Uterus (tissue), 4 donors: ENCODE measurements at regions of chr5 and their contacts with region 1.

Region 1: DNA sequence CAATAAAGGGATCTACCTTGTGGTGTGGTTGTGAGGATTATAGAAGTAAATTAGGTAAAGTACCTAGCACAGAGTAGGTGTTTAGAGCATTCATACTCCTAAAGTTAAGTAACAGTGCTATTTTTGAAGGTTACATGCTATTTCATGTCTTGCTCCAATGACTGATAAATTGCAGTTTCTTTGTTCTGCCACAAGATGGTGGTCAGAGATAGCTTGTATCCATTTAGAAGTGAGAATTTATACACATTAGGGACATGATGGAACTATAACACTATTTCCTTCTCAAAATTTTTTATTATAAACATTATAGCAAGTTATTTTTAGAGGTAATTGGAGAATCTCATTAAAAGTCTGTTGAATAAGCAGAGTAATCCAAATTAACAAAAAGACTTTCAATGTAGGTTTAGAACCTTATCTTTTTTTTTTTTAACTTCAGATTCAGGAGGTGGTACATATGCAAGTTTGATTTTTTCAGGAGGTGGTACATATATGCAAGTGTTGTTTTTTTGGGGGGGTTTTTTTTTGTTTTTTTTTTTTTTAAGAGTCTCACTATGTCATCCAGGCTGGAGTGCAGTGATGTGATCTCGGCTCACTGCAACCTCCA is 17.1 kb downstream of the MTREX start:
- DNase-seq: no peak
- H3K4me3 ChIP-seq: no peak overlapping the region
- H3K27ac ChIP-seq: no peak overlapping the region
- H3K4me1 ChIP-seq: no peaks in the 10 kb centered on the region
- H3K27me3 ChIP-seq: no peaks in the 10 kb centered on the region
- CTCF ChIP-seq: peak; percentile 44 to 75 (median 62)
- POLR2A ChIP-seq: no peak

Region 2: DNA sequence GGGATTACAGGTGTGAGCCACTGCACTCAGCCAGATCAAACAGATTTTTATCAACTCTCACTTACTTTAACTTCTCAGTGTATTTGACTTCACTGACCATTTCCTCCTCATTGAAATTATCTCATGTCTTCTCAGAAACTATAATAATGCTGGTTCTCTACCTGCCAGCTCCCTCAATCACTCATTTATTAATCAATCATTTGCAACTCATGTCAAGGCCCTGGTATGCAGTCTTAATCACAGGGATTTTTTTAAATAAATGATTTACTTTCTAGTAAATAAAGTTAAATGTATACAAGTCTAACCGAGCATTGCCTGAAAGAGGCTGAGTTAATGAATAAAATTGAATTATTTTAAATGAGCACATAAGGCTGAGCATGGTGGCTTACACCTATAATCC is 146.6 kb after region 1 on chr5:
- intact Hi-C with region 1: no loop called
- DNase-seq: no peak
- H3K4me3 ChIP-seq: no peak overlapping the region
- H3K27ac ChIP-seq: no peak overlapping the region
- H3K4me1 ChIP-seq: no peaks in the 10 kb centered on the region
- H3K27me3 ChIP-seq: no peaks in the 10 kb centered on the region
- CTCF ChIP-seq: no peak
- POLR2A ChIP-seq: no peak

Region 3: GRCh38 chr5:56233230-56233629 is 908.3 kb after region 1 on chr5 and contains the start of gene ANKRD55:
- intact Hi-C with region 1: loop called (anchors 5 kb)
- DNase-seq: no peak
- H3K4me3 ChIP-seq: no peak within 1 kb of the TSS
- H3K27ac ChIP-seq: no peak within 1 kb of the TSS
- H3K4me1 ChIP-seq: no peaks in the 10 kb centered on the region
- H3K27me3 ChIP-seq: no peaks in the 10 kb centered on the region
- CTCF ChIP-seq: no peak
- POLR2A ChIP-seq: no peak
- total RNA-seq, gene ANKRD55: 0.55 TPM in 1 of 4 donors, not detected in the others